ENCODE measurements at regions of chr19 and their contacts with region 1.

Region 1: DNA sequence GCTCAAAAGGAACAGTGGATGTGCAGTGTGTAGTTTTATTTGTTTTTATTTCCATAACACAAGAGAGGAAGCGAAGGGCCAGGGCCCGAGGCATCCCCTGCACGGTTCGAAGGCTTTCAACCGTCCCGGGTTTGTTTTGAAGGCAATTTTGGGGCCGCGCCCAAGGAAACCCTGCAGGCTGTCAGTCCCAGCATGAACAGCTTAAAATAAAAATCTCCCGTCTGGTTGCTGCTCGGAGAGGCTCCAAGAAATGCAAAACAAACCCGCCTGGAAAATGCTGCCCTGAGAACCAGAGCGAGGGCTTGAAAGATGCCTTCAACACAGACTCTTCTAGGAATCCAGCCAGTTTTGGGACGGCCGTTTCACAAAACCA is 16.0 kb downstream of the LSM4 start:
- DNase-seq: no peak
- ATAC-seq: no peak
- H3K4me3 ChIP-seq: no peak overlapping the region
- H3K27ac ChIP-seq: peak overlapping the region; percentile 95
- H3K4me1 ChIP-seq: peaks cover 57% of the 10 kb centered on the region
- H3K27me3 ChIP-seq: no peaks in the 10 kb centered on the region
- CTCF ChIP-seq: no peak

Region 2: GRCh38 chr19:18264137-18264854 is 42.6 kb before region 1 on chr19:
- intact Hi-C with region 1: no loop called
- DNase-seq: peak; percentile 43 to 80
- ATAC-seq: peak; percentile 38 to 80 (median 60)
- H3K4me3 ChIP-seq: no peak overlapping the region
- H3K27ac ChIP-seq: no peak overlapping the region
- H3K4me1 ChIP-seq: no peaks in the 10 kb centered on the region
- H3K27me3 ChIP-seq: no peaks in the 10 kb centered on the region
- CTCF ChIP-seq: no peak

Region 3: GRCh38 chr19:18274219-18274780 is 32.6 kb before region 1 on chr19 and contains the start of gene IQCN:
- intact Hi-C with region 1: no loop called
- DNase-seq: peak in 1 of 2 donors; percentile 67
- ATAC-seq: peak; percentile 18 to 34 (median 20)
- H3K4me3 ChIP-seq: peak within 1 kb of the TSS; percentile 24
- H3K27ac ChIP-seq: peak within 1 kb of the TSS; percentile 88
- H3K4me1 ChIP-seq: peaks cover 52% of the 10 kb centered on the region
- H3K27me3 ChIP-seq: no peaks in the 10 kb centered on the region
- CTCF ChIP-seq: no peak
- total RNA-seq, gene IQCN: 0.32 to 1.5 (median 0.43) TPM

Region 4: DNA sequence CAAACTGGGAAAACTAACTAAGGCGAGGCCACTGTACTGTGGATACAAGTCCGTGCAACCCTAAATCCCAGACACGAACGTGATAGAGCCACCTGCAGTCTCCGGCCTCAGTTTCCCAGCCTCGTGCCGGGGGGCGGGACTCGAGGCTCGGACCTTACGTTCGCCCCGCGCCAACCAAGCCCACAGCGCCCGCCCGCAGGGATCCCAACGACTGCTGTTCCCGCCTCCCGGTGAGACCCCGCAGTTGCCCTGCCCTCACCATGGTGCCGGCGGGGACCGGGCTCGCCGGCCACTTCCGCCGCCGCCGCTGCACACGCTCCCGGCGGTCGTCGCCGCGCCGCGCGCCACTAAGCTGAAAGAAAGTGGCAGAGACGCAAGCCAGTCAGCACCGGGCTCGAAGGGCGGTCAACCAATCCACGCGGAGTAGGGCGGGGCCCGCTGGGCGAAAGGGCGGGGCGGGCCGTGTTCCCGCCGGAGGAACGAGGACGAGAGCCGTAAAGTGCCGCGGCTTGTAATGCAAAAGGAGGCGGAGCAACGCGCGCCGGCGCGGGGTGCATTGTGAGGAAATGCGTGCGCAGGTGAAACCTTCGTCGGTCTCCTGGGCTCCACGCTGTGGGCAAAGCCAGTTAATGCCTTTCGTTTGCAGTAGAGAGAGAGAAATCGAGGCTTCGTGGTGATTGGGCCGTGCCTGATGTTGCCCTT is 16.0 kb after region 1 on chr19 and contains the start of gene LSM4:
- intact Hi-C with region 1: loop called in 1 of 2 experiments (anchors 2 kb)
- DNase-seq: peak; percentile 99
- ATAC-seq: peak; percentile 93 to 97 (median 96)
- H3K4me3 ChIP-seq: peak within 1 kb of the TSS; percentile 85
- H3K27ac ChIP-seq: peak within 1 kb of the TSS; percentile 89
- H3K4me1 ChIP-seq: peaks cover 38% of the 10 kb centered on the region
- H3K27me3 ChIP-seq: no peaks in the 10 kb centered on the region
- CTCF ChIP-seq: peak; percentile 25
- total RNA-seq, gene LSM4: 87.9 to 136 (median 112) TPM

Region 5: DNA sequence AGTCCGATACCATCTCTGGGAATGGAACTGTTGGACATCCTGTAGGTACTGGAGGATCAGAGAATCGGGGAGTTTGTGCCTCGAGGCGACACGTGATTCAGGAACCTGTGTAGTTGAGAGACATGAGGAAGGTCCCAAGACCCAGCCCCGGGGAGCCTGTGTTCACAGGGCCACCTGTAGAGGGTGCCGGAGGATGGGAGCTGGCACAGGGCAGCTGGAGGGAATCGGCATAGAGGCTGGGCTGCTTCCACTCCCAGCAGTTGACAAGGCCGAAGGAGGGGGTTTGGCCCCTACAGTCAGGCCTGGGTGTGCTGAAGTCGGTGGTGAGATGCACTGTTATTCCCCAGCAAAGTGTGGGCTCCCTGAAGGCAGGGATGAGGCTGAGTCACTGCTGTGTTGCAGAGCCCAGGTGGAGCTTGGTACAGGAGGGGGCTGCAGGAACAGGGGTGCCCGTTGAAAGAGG is 133.6 kb after region 1 on chr19:
- intact Hi-C with region 1: no loop called
- DNase-seq: no peak
- ATAC-seq: peak in 1 of 4 donors; percentile 22
- H3K4me3 ChIP-seq: no peak overlapping the region
- H3K27ac ChIP-seq: no peak overlapping the region
- H3K4me1 ChIP-seq: peaks cover 18% of the 10 kb centered on the region
- H3K27me3 ChIP-seq: peaks cover 0 to 8% (median 6%) of the 10 kb centered on the region in 3 donors
- CTCF ChIP-seq: peak; percentile 15

Measured in psoas muscle (tissue), 8 donors.